Sigmoid colon (tissue), 7 donors: ENCODE measurements at regions of chr6 and their contacts with region 1.

Region 1: DNA sequence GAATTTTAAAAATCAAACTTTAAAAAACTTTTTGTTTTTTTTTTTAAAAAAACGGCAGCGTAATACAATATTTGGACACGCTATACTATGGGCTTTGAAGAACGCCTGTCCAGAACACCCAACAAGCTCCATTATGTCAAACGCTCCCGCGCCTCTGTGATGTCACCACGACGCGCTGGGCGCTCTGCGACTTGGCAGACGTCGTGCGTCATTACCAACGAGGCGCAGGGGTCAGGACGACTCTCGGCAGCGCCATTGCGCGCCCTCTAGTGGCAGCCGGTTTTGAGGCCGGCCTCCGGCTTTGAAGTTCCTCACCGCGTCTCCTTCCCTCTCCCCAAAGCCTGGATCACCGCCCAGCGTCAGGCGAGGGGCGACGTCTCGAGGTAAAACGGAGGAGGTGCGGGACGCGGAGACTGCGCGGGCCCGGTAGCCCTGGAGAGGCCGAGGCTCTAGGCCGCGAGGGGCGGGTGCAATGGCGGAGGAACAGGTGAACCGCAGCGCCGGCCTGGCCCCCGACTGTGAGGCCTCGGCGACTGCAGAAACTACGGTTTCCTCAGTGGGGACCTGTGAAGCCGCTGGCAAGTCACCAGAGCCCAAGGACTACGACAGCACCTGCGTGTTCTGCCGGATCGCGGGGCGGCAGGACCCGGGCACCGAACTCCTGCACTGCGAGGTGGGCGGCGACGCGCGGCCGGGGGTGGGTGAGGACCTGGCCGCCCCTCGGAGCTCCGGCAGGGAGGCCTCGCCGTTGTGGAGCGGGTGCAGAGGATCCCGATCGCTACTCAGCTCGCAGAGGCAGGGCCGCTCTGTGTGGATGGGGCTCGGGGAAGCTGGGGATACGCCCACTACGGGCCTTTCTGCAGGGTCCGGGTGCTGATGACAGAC is at the start of gene HINT3:
- DNase-seq: peak; percentile 98
- H3K4me3 ChIP-seq: peak within 1 kb of the TSS; percentile 65 to 89 (median 82)
- H3K27ac ChIP-seq: peak within 1 kb of the TSS; percentile 89 to 95 (median 92)
- H3K4me1 ChIP-seq: peaks cover 0 to 30% (median 17%) of the 10 kb centered on the region in 4 donors
- H3K27me3 ChIP-seq: no peaks in the 10 kb centered on the region
- CTCF ChIP-seq: peak; percentile 95 to 98 (median 96)
- EP300 ChIP-seq: peak in 1 of 4 donors; percentile 57
- POLR2A ChIP-seq: peak; percentile 49 to 54
- total RNA-seq, gene HINT3: 41.4 to 49.6 (median 48.3) TPM

Region 2: DNA sequence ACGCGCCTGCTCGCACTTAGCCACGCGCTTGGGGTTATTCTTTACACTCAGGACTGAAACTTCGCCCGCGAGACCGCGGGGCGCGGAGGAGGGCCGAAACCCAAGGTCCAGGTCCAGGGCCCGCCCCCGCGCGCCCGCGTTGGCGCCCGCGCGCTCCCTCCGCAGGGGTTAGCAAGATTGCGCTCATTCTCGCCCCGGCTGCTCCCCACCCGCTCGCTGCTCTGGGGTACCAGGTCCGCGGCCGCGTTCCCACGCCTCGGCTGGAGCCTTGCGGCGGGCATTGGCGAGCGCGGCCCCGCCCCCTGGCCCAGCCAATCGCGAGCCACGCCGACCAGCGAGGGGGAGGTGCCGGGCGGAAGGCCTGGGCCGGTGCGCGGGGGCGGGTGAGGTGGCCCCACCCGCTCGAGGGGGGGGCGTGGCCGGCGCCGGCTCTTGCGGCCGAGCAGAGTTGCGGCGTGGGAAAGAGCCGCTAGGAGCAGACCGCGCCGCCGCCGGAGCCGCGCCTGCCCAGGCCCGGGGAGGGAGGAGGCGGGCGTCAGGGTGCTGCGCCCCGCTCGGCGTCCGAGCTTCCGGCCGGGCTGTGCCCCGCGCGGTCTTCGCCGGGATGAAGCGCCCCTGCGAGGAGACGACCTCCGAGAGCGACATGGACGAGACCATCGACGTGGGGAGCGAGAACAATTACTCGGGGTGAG is 207.4 kb before region 1 on chr6 and contains the start of gene HEY2:
- intact Hi-C with region 1: no loop called
- DNase-seq: peak; percentile 96
- H3K4me3 ChIP-seq: peak within 1 kb of the TSS; percentile 53 to 74 (median 70)
- H3K27ac ChIP-seq: peak within 1 kb of the TSS; percentile 86 to 89 (median 88)
- H3K4me1 ChIP-seq: peaks cover 0 to 33% (median 21%) of the 10 kb centered on the region in 4 donors
- H3K27me3 ChIP-seq: peaks cover 0 to 44% (median 0%) of the 10 kb centered on the region in 3 donors
- CTCF ChIP-seq: peak in 1 of 4 experiments; percentile 28
- EP300 ChIP-seq: peak in 1 of 4 donors; percentile 40
- POLR2A ChIP-seq: peak in 1 of 2 donors; percentile 17
- total RNA-seq, gene HEY2: 1.3 to 3.9 (median 2.1) TPM

Region 3: DNA sequence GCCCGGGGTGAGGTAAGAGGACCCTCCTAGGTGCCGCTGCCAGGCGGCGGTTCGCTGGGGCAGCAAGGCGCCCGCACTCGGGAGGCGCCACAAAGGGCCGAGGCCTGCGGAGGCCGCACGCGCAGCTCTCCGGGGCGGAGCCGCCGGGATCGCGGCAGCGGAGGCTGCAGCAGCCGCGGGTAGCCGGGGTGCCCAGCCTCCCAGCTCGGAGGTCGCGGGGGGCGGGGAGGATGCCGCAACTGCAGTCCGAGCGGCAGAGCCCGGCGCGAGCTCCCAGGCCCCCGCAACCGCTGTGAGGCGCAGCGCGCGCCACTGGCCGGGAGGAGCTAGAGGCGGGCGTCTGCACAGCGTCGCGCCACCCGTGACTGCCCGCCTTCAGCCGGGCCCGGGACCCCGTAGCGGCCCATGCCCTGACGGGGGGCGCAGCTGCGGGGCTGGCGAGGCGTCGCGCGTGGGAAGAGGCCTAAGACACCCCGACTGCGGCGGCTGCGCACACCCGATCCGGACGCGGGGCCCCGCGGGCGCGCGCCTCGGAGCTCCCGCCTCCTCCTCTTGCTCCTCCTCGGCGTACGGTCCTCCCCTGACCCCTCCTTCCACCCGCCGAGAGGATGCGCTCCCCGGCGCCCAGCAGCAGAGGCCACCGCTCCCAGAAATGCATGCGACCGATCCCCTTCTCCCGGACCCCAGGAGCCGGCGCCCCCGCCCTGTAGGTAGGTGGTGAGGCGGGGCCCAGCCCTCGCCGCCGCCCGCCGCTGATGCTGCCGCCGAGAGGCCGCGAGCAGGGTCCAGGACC is 166.2 kb before region 1 on chr6 and contains the start of gene NCOA7:
- intact Hi-C with region 1: loop called (anchors 2 kb)
- DNase-seq: peak; percentile 91
- H3K4me3 ChIP-seq: peak within 1 kb of the TSS; percentile 73 to 93 (median 90)
- H3K27ac ChIP-seq: peak within 1 kb of the TSS; percentile 96 to 97 (median 97)
- H3K4me1 ChIP-seq: peaks cover 0 to 22% (median 17%) of the 10 kb centered on the region in 4 donors
- H3K27me3 ChIP-seq: no peaks in the 10 kb centered on the region
- CTCF ChIP-seq: no peak
- EP300 ChIP-seq: no peak
- POLR2A ChIP-seq: peak; percentile 73 to 74
- total RNA-seq, gene NCOA7: 21.3 to 28.6 (median 26.3) TPM